ENCODE measurements at regions of chr11 and their contacts with region 1.

Region 1: GRCh38 chr11:64894070-64894796 is 15.8 kb upstream of the EHD1 start:
- DNase-seq: peak; percentile 83 to 84
- ATAC-seq: peak; percentile 63 to 86
- H3K4me3 ChIP-seq: peak overlapping the region; percentile 49; the same call in 2 of the 3 replicates
- H3K27ac ChIP-seq: peak overlapping the region; percentile 92 to 97
- H3K4me1 ChIP-seq: peaks cover 54% of the 10 kb centered on the region
- CTCF ChIP-seq: peak; percentile 93
- EP300 ChIP-seq: no peak
- POLR2A ChIP-seq: peak; percentile 29
- RAD21 ChIP-seq: peak; percentile 85 to 89

Region 2: GRCh38 chr11:64787526-64788320 is 106.5 kb before region 1 on chr11:
- CTCF ChIA-PET with region 1: interaction called, 20 read pairs
- POLR2A ChIA-PET with region 1: no interaction called
- DNase-seq: peak; percentile 72 to 89
- ATAC-seq: peak; percentile 74 to 93
- H3K4me3 ChIP-seq: no peak overlapping the region
- H3K27ac ChIP-seq: peak overlapping the region in 1 of 2 experiments; percentile 39; a peak in 1 of 6 replicates
- H3K4me1 ChIP-seq: no peaks in the 10 kb centered on the region
- CTCF ChIP-seq: peak; percentile 81
- EP300 ChIP-seq: no peak
- POLR2A ChIP-seq: no peak
- RAD21 ChIP-seq: peak; percentile 75 to 84

Region 3: GRCh38 chr11:64810271-64810890 is 83.9 kb before region 1 on chr11 and contains the start of gene MEN1:
- CTCF ChIA-PET with region 1: interaction called, 16 read pairs
- POLR2A ChIA-PET with region 1: no interaction called
- DNase-seq: peak; percentile 96 to 98
- ATAC-seq: peak; percentile 98 to 100
- H3K4me3 ChIP-seq: peak within 1 kb of the TSS; percentile 92
- H3K27ac ChIP-seq: peak within 1 kb of the TSS; percentile 91 to 93
- H3K4me1 ChIP-seq: peaks cover 6% of the 10 kb centered on the region; the same call in 2 of the 3 replicates
- CTCF ChIP-seq: no peak
- EP300 ChIP-seq: no peak
- POLR2A ChIP-seq: peak; percentile 83
- RAD21 ChIP-seq: no peak
- polyA plus RNA-seq, gene MEN1: 17.0 and 18.5 TPM in 2 replicates

Region 4: GRCh38 chr11:64905516-64906313 is 11.5 kb after region 1 on chr11:
- CTCF ChIA-PET with region 1: interaction called, 132 read pairs
- POLR2A ChIA-PET with region 1: no interaction called
- DNase-seq: no peak
- ATAC-seq: no peak
- H3K4me3 ChIP-seq: no peak overlapping the region
- H3K27ac ChIP-seq: no peak overlapping the region
- H3K4me1 ChIP-seq: no peaks in the 10 kb centered on the region; the same call in 2 of the 3 replicates
- CTCF ChIP-seq: no peak
- EP300 ChIP-seq: no peak
- POLR2A ChIP-seq: no peak
- RAD21 ChIP-seq: no peak

Region 5: GRCh38 chr11:64916775-64917662 is 22.8 kb after region 1 on chr11 and contains the start of gene ATG2A:
- CTCF ChIA-PET with region 1: interaction called, 132 read pairs
- POLR2A ChIA-PET with region 1: no interaction called
- DNase-seq: peak; percentile 99
- ATAC-seq: peak; percentile 91 to 97
- H3K4me3 ChIP-seq: peak within 1 kb of the TSS; percentile 70
- H3K27ac ChIP-seq: peak within 1 kb of the TSS; percentile 77 to 91
- H3K4me1 ChIP-seq: peaks cover 15% of the 10 kb centered on the region
- CTCF ChIP-seq: no peak
- EP300 ChIP-seq: no peak
- POLR2A ChIP-seq: peak; percentile 79
- RAD21 ChIP-seq: no peak
- polyA plus RNA-seq, gene ATG2A: 3.1 and 4.0 TPM in 2 replicates

Region 6: DNA sequence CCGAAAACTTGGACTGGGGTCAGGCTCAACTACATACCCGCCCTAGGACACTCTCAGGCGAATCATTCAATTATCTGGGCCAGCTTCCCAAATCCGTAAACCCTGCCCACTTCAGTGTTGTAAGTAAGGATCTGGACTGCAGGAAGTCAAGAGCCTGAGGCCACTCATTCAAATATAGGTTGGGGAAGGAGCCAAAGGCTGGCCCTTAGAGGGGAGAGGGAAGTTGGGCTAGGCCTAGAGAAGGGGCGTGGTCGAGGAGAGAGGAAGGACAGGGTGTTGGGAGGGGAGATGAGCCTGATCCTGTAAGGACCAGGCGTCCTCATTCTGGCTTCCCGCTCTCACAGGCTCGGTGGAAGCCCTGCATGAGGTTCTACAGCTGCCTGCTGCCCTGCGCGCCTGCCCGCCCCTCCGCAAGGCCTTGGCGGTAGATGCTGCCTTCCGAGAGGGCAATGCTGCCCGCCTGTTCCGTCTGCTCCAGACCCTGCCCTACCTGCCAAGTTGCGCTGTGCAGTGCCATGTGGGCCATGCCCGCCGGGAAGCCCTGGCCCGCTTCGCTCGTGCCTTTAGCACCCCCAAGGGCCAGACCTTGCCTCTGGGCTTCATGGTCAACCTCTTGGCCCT is 149.8 kb after region 1 on chr11:
- CTCF ChIA-PET with region 1: no interaction called
- POLR2A ChIA-PET with region 1: no interaction called
- DNase-seq: no peak
- ATAC-seq: no peak
- H3K4me3 ChIP-seq: no peak overlapping the region
- H3K27ac ChIP-seq: no peak overlapping the region
- H3K4me1 ChIP-seq: peaks cover 25% of the 10 kb centered on the region
- CTCF ChIP-seq: no peak
- EP300 ChIP-seq: no peak
- POLR2A ChIP-seq: no peak
- RAD21 ChIP-seq: no peak